ENCODE measurements at regions of chr1 and their contacts with region 1.

Region 1: GRCh38 chr1:111719674-111720132 is 19.5 kb downstream of the INKA2 start:
- DNase-seq: no peak
- ATAC-seq: no peak
- H3K4me3 Mint-ChIP-seq: no peak overlapping the region
- H3K27ac Mint-ChIP-seq: peak overlapping the region; percentile 58
- H3K4me1 Mint-ChIP-seq: peaks cover 44% of the 10 kb centered on the region
- H3K27me3 Mint-ChIP-seq: no peaks in the 10 kb centered on the region
- CTCF ChIP-seq: no peak

Region 2: DNA sequence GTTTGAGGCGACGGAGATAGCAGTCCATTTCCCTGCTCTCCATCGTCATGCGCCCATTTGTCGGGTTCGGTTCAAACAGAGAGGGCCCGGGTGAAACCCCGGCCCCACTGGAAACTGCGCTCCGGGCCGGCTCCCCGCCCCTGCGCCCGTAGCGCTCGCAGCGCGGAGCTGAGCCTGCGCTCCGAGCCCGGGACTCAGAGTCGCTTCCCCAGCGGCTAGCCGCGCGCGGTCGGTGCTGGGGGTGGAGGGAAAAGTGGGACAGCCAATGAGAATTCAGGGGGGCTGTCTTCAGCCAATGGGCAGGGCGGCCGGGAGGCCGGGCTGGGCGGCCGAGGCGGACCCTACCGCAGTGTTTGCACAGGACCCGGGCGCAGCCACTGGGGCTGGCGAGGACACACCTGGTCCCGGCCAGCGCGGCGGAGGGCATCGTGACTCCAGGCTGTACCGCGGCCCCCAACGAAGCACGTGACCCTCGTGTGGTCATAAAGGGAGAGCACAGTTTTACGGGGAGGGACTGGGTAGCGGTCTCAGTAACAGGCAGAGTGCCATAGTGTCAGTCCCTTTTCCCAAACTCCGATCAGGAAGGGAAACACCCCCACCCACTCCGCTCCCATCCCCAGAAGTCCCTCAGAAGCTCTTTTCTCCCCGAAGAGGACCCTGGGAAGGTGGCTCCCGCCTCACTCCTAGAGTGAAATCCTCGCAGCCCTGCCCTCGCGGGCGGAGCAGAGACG is 19.7 kb after region 1 on chr1 and contains the start of gene INKA2:
- CTCF ChIA-PET with region 1: interaction called, 55 read pairs
- POLR2A ChIA-PET with region 1: interaction called, 5 read pairs
- DNase-seq: peak; percentile 95
- ATAC-seq: peak; percentile 75
- H3K4me3 Mint-ChIP-seq: no peak within 1 kb of the TSS
- H3K27ac Mint-ChIP-seq: peak within 1 kb of the TSS; percentile 99
- H3K4me1 Mint-ChIP-seq: peaks cover 15% of the 10 kb centered on the region
- H3K27me3 Mint-ChIP-seq: peaks cover 23% of the 10 kb centered on the region
- CTCF ChIP-seq: no peak
- total RNA-seq, gene INKA2: 19.2 to 22.5 TPM (median 20.1 TPM) in 3 replicates

Region 3: DNA sequence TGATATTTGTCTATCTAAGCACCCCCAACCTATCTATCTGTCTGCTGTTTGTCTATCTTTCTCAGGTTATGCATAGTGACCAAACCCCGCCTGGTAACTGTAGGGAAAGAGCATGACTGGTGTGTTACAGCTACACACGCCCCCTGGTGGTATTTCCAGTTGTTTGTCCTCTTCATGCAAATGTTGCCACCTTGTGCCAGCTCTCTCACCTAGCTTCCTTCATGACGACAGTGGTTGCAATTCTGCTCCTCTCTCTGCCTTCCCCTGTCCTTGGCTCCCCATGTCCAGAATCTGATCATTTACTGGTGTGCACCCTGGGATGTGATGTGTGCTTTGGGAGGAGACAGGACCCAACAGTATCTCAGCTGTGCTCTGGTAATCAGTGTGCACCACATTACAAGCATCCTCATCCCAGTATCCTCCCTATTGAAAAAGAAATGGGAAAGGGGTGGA is 27.6 kb after region 1 on chr1:
- CTCF ChIA-PET with region 1: interaction called, 77 read pairs
- POLR2A ChIA-PET with region 1: interaction called, 3 read pairs
- DNase-seq: peak; percentile 65
- ATAC-seq: peak; percentile 73
- H3K4me3 Mint-ChIP-seq: no peak overlapping the region
- H3K27ac Mint-ChIP-seq: no peak overlapping the region; the same call in 1 of the 2 replicates
- H3K4me1 Mint-ChIP-seq: peaks cover 31% of the 10 kb centered on the region
- H3K27me3 Mint-ChIP-seq: peaks cover 12% of the 10 kb centered on the region
- CTCF ChIP-seq: peak; percentile 72

Region 4: DNA sequence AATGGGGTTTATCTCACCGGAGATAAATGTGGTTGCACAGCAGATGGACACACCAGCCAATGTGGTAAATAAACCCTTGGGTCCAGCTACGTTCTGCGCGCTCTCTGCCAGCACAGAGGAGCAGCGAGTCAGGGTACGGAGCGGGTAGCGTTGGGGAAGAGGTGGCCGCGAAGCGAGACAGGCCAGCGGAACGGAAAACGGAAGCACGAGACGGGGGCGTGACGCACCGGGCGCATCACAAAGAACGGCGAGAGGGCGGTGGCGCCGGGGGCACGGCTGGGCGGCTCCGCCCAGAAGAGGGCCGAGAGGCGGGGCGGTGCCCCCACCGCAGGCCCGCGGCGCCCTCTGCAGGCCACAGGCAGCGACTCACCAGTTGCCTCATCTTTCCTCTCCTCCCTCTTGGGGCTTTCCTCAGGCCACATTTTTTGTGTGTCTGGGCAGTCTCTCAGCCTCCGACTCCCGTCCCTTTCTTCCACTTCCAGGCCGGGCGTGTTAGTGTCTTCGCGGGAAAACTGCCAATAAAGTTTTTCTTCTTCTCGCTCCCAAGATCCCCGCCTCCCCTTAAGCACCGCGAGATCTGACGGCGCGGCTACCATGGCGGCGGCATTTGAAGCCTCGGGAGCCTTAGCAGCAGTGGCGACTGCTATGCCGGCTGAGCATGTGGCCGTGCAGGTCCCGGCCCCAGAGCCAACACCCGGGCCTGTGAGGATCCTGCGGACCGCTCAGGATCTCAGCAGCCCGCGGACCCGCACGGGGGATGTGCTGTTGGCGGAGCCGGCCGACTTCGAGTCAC is 35.8 kb after region 1 on chr1 and contains the start of gene DDX20:
- CTCF ChIA-PET with region 1: interaction called, 29 read pairs
- POLR2A ChIA-PET with region 1: interaction called, 4 read pairs
- DNase-seq: peak; percentile 90
- ATAC-seq: peak; percentile 86
- H3K4me3 Mint-ChIP-seq: peak within 1 kb of the TSS; percentile 97
- H3K27ac Mint-ChIP-seq: peak within 1 kb of the TSS; percentile 99
- H3K4me1 Mint-ChIP-seq: peaks cover 19% of the 10 kb centered on the region
- H3K27me3 Mint-ChIP-seq: peaks cover 7% of the 10 kb centered on the region
- CTCF ChIP-seq: peak; percentile 69; the same call in 1 of the 2 replicates
- total RNA-seq, gene DDX20: 15.0 to 19.3 TPM (median 17.9 TPM) in 3 replicates

Region 5: GRCh38 chr1:111769517-111770146 is 49.9 kb after region 1 on chr1:
- CTCF ChIA-PET with region 1: interaction called, 55 read pairs
- POLR2A ChIA-PET with region 1: interaction called, 4 read pairs
- DNase-seq: no peak
- ATAC-seq: no peak
- H3K4me3 Mint-ChIP-seq: no peak overlapping the region
- H3K27ac Mint-ChIP-seq: no peak overlapping the region
- H3K4me1 Mint-ChIP-seq: no peaks in the 10 kb centered on the region
- H3K27me3 Mint-ChIP-seq: no peaks in the 10 kb centered on the region; the same call in 1 of the 2 replicates
- CTCF ChIP-seq: peak; percentile 60